Mammary epithelial cell (primary cell): ENCODE measurements at regions of chr6 and their contacts with region 1.

Region 1: DNA sequence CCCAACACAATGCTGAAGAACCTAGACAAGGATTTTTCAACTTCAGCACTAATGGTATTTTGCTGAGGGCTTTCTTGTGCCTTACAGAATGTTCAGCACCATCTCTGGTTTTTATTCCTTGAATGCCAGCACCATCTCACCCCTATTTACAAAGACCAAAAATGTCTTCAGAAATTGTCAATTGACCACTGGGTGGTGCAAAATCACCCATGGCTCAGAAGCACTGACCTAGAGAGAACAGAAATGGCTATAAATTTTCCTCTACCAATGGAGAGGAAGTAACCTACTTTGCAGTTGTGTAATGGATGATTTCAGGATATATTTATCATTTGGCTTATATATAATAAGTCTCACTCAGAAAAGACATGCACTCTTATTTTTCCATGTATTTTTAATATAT is 431.0 kb upstream of the IRAK1BP1 start:
- DNase-seq: peak; percentile 23
- H3K4me3 ChIP-seq: no peak overlapping the region
- H3K27ac ChIP-seq: no peak overlapping the region
- H3K4me1 ChIP-seq: no peaks in the 10 kb centered on the region
- H3K27me3 ChIP-seq: no peaks in the 10 kb centered on the region
- CTCF ChIP-seq: peak; percentile 23 to 57

Region 2: DNA sequence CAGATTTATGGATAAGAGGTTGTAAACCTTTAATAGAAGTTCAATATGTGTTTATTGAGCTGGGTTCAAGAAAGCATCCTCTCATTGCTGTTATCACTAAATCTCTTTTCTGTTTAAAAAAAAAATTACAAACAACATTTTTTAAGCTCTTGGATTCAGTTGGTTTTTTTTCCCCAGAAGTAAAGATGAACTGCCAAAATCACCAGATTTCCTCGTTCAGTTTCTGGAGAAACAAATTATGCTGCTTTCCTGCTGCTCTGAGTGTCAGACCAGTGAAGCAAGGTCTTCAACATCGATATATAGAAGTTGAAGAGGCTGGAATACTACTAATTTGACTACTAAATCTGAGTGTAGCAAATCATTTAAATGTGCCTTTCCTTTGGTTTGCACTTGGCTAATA is 78.9 kb after region 1 on chr6:
- CTCF ChIA-PET with region 1: no interaction called
- dilution Hi-C with region 1: no loop called
- in situ Hi-C with region 1: no loop called
- intact Hi-C with region 1: loop called (anchors 2 kb)
- DNase-seq: no peak
- H3K4me3 ChIP-seq: no peak overlapping the region
- H3K27ac ChIP-seq: no peak overlapping the region
- H3K4me1 ChIP-seq: no peaks in the 10 kb centered on the region
- H3K27me3 ChIP-seq: no peaks in the 10 kb centered on the region
- CTCF ChIP-seq: no peak

Region 3: DNA sequence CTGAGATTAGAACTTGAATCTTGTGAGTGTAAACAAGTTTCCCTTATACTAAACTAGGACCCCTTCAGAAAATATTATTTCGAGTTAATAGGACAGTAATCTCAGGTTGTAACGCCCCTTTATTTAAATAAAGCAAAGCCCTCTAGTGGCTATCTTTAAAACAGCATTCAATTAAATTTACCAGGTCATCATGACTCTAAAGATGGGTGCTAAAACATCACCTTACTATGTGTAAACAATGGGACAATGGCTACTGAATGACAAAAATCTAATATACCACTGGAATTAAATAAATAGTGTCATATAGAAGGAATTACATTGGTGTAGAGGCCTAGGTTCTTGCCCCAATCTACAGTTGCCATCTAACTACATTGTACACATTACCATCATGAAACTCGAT is 175.6 kb after region 1 on chr6:
- CTCF ChIA-PET with region 1: no interaction called
- dilution Hi-C with region 1: no loop called
- in situ Hi-C with region 1: no loop called
- intact Hi-C with region 1: loop called (anchors 2 kb)
- DNase-seq: no peak
- H3K4me3 ChIP-seq: no peak overlapping the region
- H3K27ac ChIP-seq: no peak overlapping the region
- H3K4me1 ChIP-seq: peaks cover 19% of the 10 kb centered on the region
- H3K27me3 ChIP-seq: no peaks in the 10 kb centered on the region
- CTCF ChIP-seq: peak; percentile 57 to 61

Region 4: GRCh38 chr6:78770766-78771165 is 334.4 kb after region 1 on chr6:
- CTCF ChIA-PET with region 1: interaction called, 4 read pairs
- dilution Hi-C with region 1: no loop called
- in situ Hi-C with region 1: no loop called
- intact Hi-C with region 1: loop called (anchors 1 kb)
- DNase-seq: no peak
- H3K4me3 ChIP-seq: no peak overlapping the region
- H3K27ac ChIP-seq: no peak overlapping the region
- H3K4me1 ChIP-seq: no peaks in the 10 kb centered on the region
- H3K27me3 ChIP-seq: no peaks in the 10 kb centered on the region
- CTCF ChIP-seq: peak in 1 of 2 donors; percentile 48

Region 5: DNA sequence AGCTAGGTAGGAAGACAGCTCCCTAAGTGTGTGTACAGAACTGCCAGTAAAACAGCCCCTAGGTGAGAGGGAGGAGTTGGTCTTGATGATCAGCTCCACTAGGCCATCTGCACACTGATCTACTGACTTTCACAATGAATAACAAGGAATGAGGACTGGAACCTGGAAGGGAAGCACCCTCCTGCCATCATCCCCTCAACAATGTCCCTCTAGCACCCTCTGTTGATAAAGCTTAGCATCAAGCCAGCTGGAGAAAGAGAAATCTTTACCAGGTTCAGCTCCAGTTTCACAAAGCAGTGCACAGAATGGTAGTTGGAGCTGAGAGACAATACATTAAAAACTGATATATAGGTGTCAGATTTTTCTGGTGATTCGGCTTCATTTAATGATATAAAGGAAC is 373.8 kb after region 1 on chr6:
- CTCF ChIA-PET with region 1: interaction called, 9 read pairs
- dilution Hi-C with region 1: no loop called
- in situ Hi-C with region 1: loop called in 1 of 2 experiments (anchors 25 kb)
- intact Hi-C with region 1: loop called (anchors 1 kb)
- DNase-seq: peak; percentile 77
- H3K4me3 ChIP-seq: no peak overlapping the region
- H3K27ac ChIP-seq: peak overlapping the region; percentile 85
- H3K4me1 ChIP-seq: peaks cover 23% of the 10 kb centered on the region
- H3K27me3 ChIP-seq: no peaks in the 10 kb centered on the region
- CTCF ChIP-seq: peak; percentile 76 to 80